CD4-positive, alpha-beta T cell (primary cell): ENCODE measurements at regions of chr11 and their contacts with region 1.

Region 1: DNA sequence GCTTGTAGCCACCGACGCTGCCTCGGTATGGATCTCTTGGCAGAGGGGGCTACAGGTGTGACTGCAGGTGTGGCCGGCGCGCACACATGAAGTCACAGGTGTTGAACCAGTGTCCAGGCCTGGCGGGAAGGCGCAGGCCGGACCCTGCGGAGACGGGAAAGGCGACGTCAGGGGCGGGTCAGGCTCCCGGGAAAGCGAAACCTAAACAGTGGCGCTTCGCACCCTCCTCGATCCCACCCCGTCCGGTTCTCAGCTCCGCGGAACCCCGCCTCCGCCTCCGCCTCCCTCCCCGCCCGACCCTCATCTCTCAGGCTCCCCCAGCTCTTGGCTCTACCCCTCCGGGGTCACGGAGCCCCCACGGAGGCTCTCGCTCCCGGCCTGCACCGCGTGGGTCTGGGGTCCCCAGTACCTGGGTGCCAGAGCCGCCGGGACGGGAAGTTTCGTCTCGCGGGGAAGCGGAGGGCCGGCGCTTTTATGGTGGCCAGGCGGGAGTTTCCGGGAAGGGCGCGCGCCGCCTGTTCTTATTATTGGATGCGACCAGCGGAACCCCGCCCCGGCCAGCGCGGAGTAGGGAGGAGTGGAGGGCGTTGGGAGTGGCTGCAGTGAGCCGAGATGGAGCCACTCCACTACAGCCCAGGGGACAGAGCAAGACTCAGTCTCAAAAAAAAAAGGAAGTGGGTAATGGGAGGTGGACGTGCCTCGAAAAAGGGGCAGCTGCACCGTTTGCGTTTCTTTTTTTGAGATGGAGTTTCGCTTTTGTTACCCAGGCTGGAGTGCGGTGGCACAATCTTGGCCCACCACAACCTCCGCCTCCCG is at the start of gene IRF7:
- DNase-seq: peak; percentile 67 to 93 (median 86)
- ATAC-seq: peak; percentile 65
- H3K4me3 ChIP-seq: peak within 1 kb of the TSS; percentile 97
- H3K4me3 Mint-ChIP-seq: peak within 1 kb of the TSS; percentile 96
- H3K27ac ChIP-seq: peak within 1 kb of the TSS; percentile 83 to 95
- H3K27ac Mint-ChIP-seq: peak within 1 kb of the TSS; percentile 89
- H3K4me1 ChIP-seq: peaks cover 34% of the 10 kb centered on the region
- H3K4me1 Mint-ChIP-seq: peaks cover 16% of the 10 kb centered on the region
- H3K27me3 ChIP-seq: no peaks in the 10 kb centered on the region
- H3K27me3 Mint-ChIP-seq: no peaks in the 10 kb centered on the region
- CTCF ChIP-seq: no peak
- total RNA-seq, gene IRF7: 36.5 to 37.7 TPM

Region 2: DNA sequence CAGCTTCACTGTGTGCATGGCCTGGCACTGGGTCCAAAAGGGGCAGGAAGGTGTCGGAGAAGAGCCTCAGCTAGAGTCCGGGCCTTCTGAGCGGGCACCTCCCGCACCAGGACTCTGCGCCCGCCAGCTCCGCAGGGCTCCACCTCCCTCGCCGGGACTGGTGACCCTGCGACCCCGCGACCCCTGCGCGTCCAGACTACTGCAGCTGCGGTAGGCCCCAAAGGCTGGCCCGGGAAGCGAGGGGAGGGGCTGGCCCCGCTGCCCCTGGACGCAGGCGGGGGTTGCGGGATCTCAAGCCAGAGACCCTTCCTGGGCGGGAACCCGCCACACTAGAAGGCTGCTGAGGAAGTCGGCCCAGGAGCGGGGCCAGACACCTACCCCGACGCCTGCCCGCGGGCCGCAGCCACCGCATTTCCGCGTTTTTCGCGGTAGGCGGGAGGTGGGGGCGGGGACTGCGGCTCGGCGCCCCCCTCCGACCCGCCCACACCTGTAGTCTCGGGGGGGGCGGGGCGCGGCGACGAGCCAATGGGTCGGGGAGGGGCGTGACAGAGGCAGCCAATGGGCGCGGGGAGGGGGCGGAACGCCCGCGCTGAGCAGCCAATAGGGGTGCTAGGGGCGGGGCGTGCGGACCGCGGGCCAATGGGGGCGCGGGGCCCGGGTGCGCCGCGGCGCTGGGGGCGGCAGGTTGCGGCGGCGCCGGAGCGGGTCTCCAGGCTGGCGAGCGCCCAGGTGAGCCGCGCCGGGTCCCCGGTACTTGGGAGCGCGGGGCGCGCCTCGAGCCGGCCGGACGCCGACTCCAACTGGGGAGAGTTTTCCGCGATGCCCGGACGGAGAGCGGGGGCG is 55.2 kb before region 1 on chr11 and contains the starts of genes LMNTD2 and RASSF7:
- CTCF ChIA-PET with region 1: interaction called, 4 read pairs
- POLR2A ChIA-PET with region 1: interaction called, 7 read pairs
- intact Hi-C with region 1: loop called in 1 of 2 experiments (anchors 2 kb)
- DNase-seq: peak; percentile 93 to 98 (median 96)
- ATAC-seq: peak; percentile 92
- H3K4me3 ChIP-seq: peak within 1 kb of the TSS; percentile 60
- H3K4me3 Mint-ChIP-seq: peak within 1 kb of the TSS; percentile 93
- H3K27ac ChIP-seq: peak within 1 kb of the TSS; percentile 39 to 78
- H3K27ac Mint-ChIP-seq: peak within 1 kb of the TSS; percentile 88
- H3K4me1 ChIP-seq: peaks cover 39% of the 10 kb centered on the region
- H3K4me1 Mint-ChIP-seq: peaks cover 13% of the 10 kb centered on the region
- H3K27me3 ChIP-seq: no peaks in the 10 kb centered on the region
- H3K27me3 Mint-ChIP-seq: no peaks in the 10 kb centered on the region
- CTCF ChIP-seq: no peak
- total RNA-seq, gene LMNTD2: 8.2 to 10.3 TPM
- total RNA-seq, gene RASSF7: 14.1 to 15.7 TPM